ENCODE measurements at regions of chr4 and their contacts with region 1.

Region 1: DNA sequence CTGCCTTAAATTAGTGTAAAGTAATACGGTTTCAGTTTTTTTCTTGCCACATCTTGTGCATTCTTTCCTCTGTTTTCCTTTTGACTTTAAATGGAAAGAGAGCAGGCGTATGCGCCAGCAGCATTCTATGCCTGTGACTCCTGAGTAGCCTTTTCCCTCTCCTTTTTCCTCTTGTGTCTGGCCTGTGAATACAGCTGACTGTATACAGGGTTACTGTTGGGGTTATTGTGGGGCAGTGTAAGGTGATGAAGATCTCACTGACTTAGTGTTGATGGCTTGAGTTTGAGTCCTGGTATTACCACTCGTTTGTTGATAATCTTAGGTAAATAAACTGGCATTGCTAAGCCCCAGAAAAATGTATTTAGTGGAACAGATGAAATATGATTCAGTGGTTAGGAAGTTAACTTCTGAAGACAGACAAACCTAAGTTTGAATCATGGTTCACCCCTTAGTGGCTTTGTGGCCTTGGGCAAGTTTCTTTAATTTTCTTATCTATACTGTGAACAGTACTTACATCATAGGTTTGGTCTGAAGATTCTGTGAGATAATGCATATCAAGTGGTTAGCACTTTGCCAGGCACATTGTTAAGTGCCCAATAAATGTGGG is 105.1 kb downstream of the FNIP2 start:
- DNase-seq: peak; percentile 2
- H3K4me3 Mint-ChIP-seq: no peak overlapping the region
- H3K27ac Mint-ChIP-seq: no peak overlapping the region
- H3K4me1 Mint-ChIP-seq: peaks cover 10% of the 10 kb centered on the region
- H3K27me3 Mint-ChIP-seq: no peaks in the 10 kb centered on the region
- CTCF ChIP-seq: no peak

Region 2: GRCh38 chr4:159201168-159201567 is 327.3 kb after region 1 on chr4:
- CTCF ChIA-PET with region 1: no interaction called
- intact Hi-C with region 1: loop called (anchors 5 kb)
- DNase-seq: no peak
- H3K4me3 Mint-ChIP-seq: no peak overlapping the region
- H3K27ac Mint-ChIP-seq: no peak overlapping the region
- H3K4me1 Mint-ChIP-seq: no peaks in the 10 kb centered on the region
- H3K27me3 Mint-ChIP-seq: no peaks in the 10 kb centered on the region
- CTCF ChIP-seq: no peak

Measured in Calu3 (cell line).